ENCODE measurements at regions of chr1 and their contacts with region 1.

Region 1: DNA sequence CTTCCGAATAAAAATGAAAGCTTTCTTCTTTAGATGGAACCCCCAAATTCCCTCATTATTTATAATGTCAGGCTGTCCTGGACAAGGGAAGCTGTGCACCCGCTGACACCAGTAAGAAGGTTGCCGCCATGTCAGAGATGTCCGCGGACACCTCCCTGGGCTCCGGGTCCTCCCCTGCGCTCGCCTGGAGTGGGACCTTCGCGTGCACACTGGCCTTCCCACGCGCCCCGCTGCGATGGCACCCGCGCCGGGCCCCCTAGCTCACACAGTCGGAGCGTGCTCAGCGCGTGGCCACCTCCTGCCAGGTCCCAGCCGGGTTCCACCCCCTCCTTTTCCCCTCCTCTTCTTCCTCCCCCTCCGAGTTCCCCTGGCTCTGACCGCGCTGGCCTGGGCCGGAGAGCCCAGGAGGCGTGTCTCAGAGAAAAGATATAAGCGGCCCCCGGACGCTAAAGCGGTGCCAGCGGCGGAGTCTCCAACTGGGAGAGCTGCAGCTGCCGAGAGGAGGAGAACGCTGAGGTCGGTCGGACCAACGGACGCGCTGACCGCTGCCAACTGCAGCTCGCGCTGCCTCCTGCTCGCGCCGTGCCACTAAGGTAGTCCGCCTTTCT is at the start of gene G0S2:
- DNase-seq: no peak
- H3K4me3 ChIP-seq: peak within 1 kb of the TSS; percentile 14 to 35 (median 26)
- H3K27ac ChIP-seq: no peak within 1 kb of the TSS
- H3K4me1 ChIP-seq: peaks cover 53% of the 10 kb centered on the region
- H3K27me3 ChIP-seq: no peaks in the 10 kb centered on the region
- CTCF ChIP-seq: no peak
- total RNA-seq, gene G0S2: 8.2 to 35.9 TPM

Region 2: GRCh38 chr1:209659909-209660308 is 15.2 kb before region 1 on chr1:
- CTCF ChIA-PET with region 1: no interaction called
- dilution Hi-C with region 1: no loop called
- in situ Hi-C with region 1: no loop called
- intact Hi-C with region 1: loop called (anchors 2 kb)
- DNase-seq: peak; percentile 95
- H3K4me3 ChIP-seq: no peak overlapping the region
- H3K27ac ChIP-seq: peak overlapping the region; percentile 100
- H3K4me1 ChIP-seq: peaks cover 65% of the 10 kb centered on the region
- H3K27me3 ChIP-seq: no peaks in the 10 kb centered on the region
- CTCF ChIP-seq: no peak

Region 3: GRCh38 chr1:209720326-209720725 is 45.3 kb after region 1 on chr1:
- CTCF ChIA-PET with region 1: no interaction called
- dilution Hi-C with region 1: no loop called
- in situ Hi-C with region 1: no loop called
- intact Hi-C with region 1: no loop called
- DNase-seq: no peak
- H3K4me3 ChIP-seq: no peak overlapping the region
- H3K27ac ChIP-seq: no peak overlapping the region
- H3K4me1 ChIP-seq: no peaks in the 10 kb centered on the region
- H3K27me3 ChIP-seq: no peaks in the 10 kb centered on the region
- CTCF ChIP-seq: no peak

Region 4: DNA sequence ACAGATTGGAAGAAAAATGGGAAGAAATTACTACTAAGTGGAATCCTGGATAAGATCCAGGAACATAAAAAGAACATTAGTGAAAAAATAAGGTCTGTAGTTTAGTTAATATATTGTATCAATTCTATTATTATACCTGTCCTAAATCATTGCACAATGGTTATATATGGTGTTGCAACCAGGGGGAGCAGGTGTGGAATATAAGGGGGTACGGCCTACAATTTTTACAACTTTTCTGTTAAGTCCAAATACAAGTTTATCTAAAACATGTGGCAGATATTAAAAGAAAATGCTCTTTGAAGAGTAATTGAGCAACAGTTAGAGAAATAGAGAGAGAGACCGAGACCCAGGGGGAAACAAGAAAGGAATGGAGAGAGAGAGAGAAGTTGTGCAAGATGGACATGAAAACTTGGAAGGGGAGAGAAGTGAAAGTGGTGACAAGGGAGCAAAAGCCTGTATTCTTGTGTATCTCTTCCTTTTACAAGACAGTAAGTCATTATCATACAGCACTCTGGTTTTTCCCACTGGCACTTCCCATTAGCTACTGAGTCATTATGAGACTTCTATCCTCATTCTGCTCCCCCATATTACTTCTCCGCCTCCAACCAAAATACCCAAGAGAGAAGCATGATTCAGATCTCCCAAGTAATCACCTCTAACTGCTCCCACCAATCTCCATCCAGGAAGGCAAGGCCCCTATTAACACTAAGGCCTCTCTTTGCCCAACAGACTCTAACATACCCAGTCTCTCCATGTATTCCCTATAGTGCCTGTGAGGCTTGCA is 58.5 kb after region 1 on chr1:
- CTCF ChIA-PET with region 1: no interaction called
- dilution Hi-C with region 1: loop called (anchors 5 kb)
- in situ Hi-C with region 1: no loop called
- intact Hi-C with region 1: no loop called
- DNase-seq: peak; percentile 75
- H3K4me3 ChIP-seq: no peak overlapping the region
- H3K27ac ChIP-seq: no peak overlapping the region
- H3K4me1 ChIP-seq: no peaks in the 10 kb centered on the region
- H3K27me3 ChIP-seq: no peaks in the 10 kb centered on the region
- CTCF ChIP-seq: no peak